Head of caudate nucleus (tissue), 42 donors: ENCODE measurements at regions of chr4 and their contacts with region 1.

Region 1: GRCh38 chr4:80365928-80366327 is 30.4 kb downstream of the CFAP299 start:
- DNase-seq: peak in 6 of 42 donors; percentile 9 to 29 (median 23)

Region 2: DNA sequence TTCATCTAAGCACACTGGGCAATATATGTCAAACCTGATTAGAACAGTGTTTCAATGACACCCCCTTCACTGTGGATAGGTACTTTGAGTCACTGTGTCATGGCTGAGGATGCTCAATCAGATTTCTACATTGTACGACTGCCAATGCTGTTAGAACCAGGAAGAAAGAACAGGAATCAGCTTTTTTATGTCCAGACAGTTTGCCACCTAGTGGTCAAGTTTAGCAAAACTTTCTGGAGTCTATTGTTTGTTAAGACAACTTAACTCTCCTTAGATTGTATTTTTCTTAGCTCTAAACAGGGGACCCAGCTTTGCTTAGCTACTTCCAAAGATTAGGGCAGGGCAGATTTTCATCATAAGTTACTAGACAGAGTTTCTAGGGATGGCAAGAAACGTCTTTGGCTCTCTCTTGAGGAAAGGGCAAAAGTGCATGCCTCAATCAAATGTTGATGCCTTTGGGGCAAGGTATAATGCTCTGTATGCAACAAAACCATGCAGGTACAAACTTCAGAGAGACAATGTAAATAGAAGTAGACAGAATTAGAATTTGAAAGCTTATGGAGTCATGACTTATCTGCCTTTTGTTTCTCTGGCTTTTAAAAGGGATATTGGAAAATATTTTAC is 624.1 kb after region 1 on chr4:
- intact Hi-C with region 1: loop called (anchors 5 kb)
- DNase-seq: peak in 16 of 42 donors; percentile 11 to 66 (median 29)

Region 3: GRCh38 chr4:81040012-81040659 is 674.2 kb after region 1 on chr4:
- intact Hi-C with region 1: loop called (anchors 10 kb)
- DNase-seq: peak in 2 of 42 donors; percentile 10 to 42